ENCODE measurements at regions of chr19 and their contacts with region 1.

Region 1: GRCh38 chr19:12639901-12640613 is 26.5 kb downstream of the MAN2B1 start:
- DNase-seq: peak; percentile 53
- ATAC-seq: peak; percentile 98
- H3K4me3 ChIP-seq: no peak overlapping the region
- H3K27ac ChIP-seq: no peak overlapping the region
- H3K4me1 ChIP-seq: 0 out of 2 replicates have a peak, but pooled peaks cover 5% of the 10 kb centered on the region
- H3K27me3 ChIP-seq: no peaks in the 10 kb centered on the region
- CTCF ChIP-seq: peak; percentile 74 to 93 (median 89); a peak in 5 of 6 replicates
- EP300 ChIP-seq: no peak
- POLR2A ChIP-seq: peak; percentile 54
- RAD21 ChIP-seq: peak; percentile 51; the same call in 1 of the 2 replicates

Region 2: GRCh38 chr19:12564016-12564664 is 75.9 kb before region 1 on chr19:
- CTCF ChIA-PET with region 1: interaction called, 8 read pairs
- POLR2A ChIA-PET with region 1: no interaction called
- RAD21 ChIA-PET with region 1: no interaction called
- SMC1A ChIA-PET with region 1: no interaction called
- in situ Hi-C with region 1: no loop called
- intact Hi-C with region 1: loop called (anchors 1 kb)
- DNase-seq: peak; percentile 65
- ATAC-seq: peak; percentile 95
- H3K4me3 ChIP-seq: no peak overlapping the region
- H3K27ac ChIP-seq: no peak overlapping the region
- H3K4me1 ChIP-seq: no peaks in the 10 kb centered on the region
- H3K27me3 ChIP-seq: no peaks in the 10 kb centered on the region
- CTCF ChIP-seq: peak; percentile 98 to 99 (median 99)
- EP300 ChIP-seq: no peak
- POLR2A ChIP-seq: no peak
- RAD21 ChIP-seq: peak; percentile 99

Region 3: DNA sequence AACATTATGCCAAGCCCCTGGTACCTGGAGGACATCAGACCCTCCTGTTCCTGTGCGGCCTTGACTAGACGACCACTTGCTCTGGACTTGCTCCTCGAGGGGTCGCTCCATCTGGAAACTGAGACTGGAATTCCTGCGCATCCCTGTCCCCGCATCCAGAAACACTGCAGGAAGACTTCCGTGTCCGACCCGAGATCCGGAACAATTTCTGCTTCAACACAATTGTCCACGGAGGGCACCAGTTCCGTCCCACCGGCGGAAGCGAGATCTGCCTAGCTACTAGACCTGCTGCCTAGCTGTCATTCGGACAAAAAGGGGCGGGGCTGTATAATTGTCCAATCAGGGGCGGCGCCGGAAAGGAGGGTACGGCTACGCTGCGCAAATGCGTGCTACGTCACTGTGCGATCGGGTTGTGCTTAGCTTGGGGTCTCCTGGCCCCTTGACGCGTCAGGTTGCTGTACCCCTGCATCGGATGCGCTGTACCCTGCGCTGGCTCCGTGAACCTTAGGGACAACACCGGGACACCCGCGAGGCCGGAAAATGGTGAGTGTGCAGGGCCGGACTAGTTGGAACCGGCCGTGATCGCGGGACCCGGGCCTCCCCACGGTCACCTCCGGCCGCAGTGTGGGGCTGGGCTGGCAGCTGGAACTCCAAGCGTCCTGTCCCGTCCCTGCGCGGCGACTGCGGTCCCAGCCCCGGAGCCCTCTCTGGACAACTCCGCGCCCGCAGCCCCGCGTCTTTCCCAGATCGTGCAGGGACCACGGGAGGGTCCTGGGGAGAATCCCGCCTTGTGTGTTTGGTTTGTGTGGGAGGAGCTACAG is 29.3 kb before region 1 on chr19 and contains the starts of genes ZNF490 and ZNF791:
- CTCF ChIA-PET with region 1: interaction called, 10 read pairs
- POLR2A ChIA-PET with region 1: no interaction called
- RAD21 ChIA-PET with region 1: interaction called, 4 read pairs
- SMC1A ChIA-PET with region 1: no interaction called
- in situ Hi-C with region 1: no loop called
- intact Hi-C with region 1: no loop called
- DNase-seq: peak; percentile 89
- ATAC-seq: peak; percentile 83
- H3K4me3 ChIP-seq: peak within 1 kb of the TSS; percentile 96
- H3K27ac ChIP-seq: peak within 1 kb of the TSS; percentile 95
- H3K4me1 ChIP-seq: 0 out of 2 replicates have a peak, but pooled peaks cover 7% of the 10 kb centered on the region
- H3K27me3 ChIP-seq: no peaks in the 10 kb centered on the region
- CTCF ChIP-seq: no peak
- EP300 ChIP-seq: 0 out of 4 replicates have a peak, but pooled peaks of 1 of the 2 experiments have one; percentile 16
- POLR2A ChIP-seq: peak; percentile 98
- RAD21 ChIP-seq: no peak
- polyA plus RNA-seq, gene ZNF490: 0.57 to 1.4 TPM
- polyA plus RNA-seq, gene ZNF791: 7.5 to 9.2 TPM

Region 4: DNA sequence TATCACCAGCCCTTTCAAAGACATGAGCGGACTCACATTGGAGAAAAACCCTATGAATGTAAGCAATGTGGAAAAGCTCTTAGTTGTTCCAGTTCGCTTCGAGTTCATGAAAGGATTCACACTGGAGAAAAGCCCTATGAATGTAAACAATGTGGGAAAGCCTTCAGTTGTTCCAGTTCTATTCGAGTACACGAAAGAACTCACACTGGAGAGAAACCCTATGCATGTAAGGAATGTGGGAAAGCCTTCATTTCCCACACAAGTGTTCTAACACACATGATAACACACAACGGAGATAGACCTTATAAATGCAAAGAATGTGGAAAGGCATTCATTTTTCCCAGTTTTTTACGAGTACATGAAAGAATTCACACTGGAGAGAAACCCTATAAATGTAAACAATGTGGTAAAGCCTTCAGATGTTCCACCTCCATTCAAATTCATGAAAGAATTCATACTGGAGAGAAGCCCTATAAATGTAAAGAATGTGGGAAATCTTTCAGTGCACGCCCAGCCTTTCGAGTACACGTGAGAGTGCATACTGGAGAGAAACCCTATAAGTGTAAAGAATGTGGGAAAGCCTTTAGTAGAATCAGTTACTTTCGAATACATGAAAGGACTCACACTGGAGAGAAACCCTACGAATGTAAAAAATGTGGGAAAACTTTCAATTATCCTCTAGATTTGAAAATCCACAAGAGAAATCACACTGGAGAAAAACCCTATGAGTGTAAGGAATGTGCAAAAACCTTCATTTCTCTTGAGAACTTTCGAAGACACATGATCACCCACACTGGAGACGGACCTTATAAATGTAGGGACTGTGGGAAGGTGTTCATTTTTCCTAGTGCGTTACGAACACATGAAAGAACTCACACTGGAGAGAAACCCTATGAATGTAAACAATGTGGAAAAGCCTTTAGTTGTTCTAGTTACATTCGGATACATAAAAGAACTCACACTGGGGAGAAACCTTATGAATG is 11.7 kb before region 1 on chr19:
- CTCF ChIA-PET with region 1: interaction called, 11 read pairs
- POLR2A ChIA-PET with region 1: interaction called, 7 read pairs
- RAD21 ChIA-PET with region 1: no interaction called
- SMC1A ChIA-PET with region 1: interaction called, 3 read pairs
- in situ Hi-C with region 1: no loop called
- intact Hi-C with region 1: no loop called
- DNase-seq: no peak
- ATAC-seq: no peak
- H3K4me3 ChIP-seq: no peak overlapping the region
- H3K27ac ChIP-seq: no peak overlapping the region
- H3K4me1 ChIP-seq: no peaks in the 10 kb centered on the region
- H3K27me3 ChIP-seq: no peaks in the 10 kb centered on the region
- CTCF ChIP-seq: no peak
- EP300 ChIP-seq: no peak
- POLR2A ChIP-seq: no peak
- RAD21 ChIP-seq: no peak

Region 5: DNA sequence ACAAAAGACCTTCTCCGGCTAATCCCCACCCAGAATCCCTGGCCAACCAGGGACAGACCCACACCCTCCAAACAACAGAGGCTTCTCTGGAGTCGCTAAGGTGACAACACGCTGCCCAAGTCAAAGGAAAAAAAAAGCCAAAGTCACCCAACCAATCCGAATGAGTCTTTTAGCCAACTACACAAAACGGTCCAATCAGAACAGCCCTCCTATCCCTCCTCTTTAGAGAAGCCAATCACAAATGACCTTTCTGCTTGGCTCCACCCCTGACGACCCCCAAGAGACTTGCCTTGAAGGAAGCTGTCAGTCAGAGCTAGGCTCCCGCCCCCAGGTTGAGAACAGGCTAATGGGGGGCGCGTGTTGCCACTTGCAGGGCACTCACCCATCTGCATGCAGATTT is 63.0 kb after region 1 on chr19:
- CTCF ChIA-PET with region 1: no interaction called
- POLR2A ChIA-PET with region 1: no interaction called
- RAD21 ChIA-PET with region 1: no interaction called
- SMC1A ChIA-PET with region 1: no interaction called
- in situ Hi-C with region 1: no loop called
- intact Hi-C with region 1: no loop called
- DNase-seq: no peak
- ATAC-seq: peak; percentile 74
- H3K4me3 ChIP-seq: no peak overlapping the region
- H3K27ac ChIP-seq: no peak overlapping the region
- H3K4me1 ChIP-seq: no peaks in the 10 kb centered on the region
- H3K27me3 ChIP-seq: no peaks in the 10 kb centered on the region
- CTCF ChIP-seq: no peak
- EP300 ChIP-seq: no peak
- POLR2A ChIP-seq: no peak
- RAD21 ChIP-seq: no peak

Region 6: DNA sequence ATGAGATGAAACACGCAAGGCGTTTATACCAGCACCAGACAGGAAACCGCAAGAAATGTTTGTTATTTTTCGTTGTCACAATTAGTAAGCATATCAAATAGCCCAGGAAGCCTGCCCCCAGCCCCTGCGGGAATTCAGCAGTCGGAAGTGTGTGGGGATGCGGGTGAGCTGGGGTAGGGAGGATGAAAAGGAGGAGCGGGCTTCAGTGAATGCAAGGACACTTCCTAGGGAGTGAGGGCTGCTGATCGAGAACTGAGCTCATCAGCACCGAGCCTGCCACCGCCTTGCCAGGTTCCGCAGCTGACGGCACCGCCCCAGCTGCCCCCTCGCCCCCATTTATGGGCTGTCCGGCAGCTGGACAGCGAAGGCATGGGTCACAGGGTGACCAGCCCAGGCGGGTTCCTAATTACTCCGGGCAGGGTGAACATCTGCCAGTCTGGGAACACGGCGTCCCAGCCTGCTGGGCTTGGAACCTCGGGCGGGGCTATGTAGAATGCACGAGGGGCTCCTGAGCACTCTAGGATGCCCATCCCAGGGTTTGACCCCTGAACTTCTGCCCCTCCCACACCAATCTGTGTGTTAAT is 110.0 kb after region 1 on chr19:
- CTCF ChIA-PET with region 1: no interaction called
- POLR2A ChIA-PET with region 1: no interaction called
- RAD21 ChIA-PET with region 1: no interaction called
- SMC1A ChIA-PET with region 1: no interaction called
- in situ Hi-C with region 1: no loop called
- intact Hi-C with region 1: no loop called
- DNase-seq: no peak
- ATAC-seq: no peak
- H3K4me3 ChIP-seq: no peak overlapping the region
- H3K27ac ChIP-seq: no peak overlapping the region
- H3K4me1 ChIP-seq: no peaks in the 10 kb centered on the region
- H3K27me3 ChIP-seq: no peaks in the 10 kb centered on the region
- CTCF ChIP-seq: no peak
- EP300 ChIP-seq: no peak
- POLR2A ChIP-seq: no peak
- RAD21 ChIP-seq: no peak

Measured in GM12878 (cell line).